WTC11 (cell line): ENCODE measurements at regions of chr12 and their contacts with region 1.

Region 1: GRCh38 chr12:124512667-124513296 is 54.6 kb downstream of the NCOR2 start:
- DNase-seq: peak; percentile 84
- ATAC-seq: peak; percentile 75
- H3K4me3 Mint-ChIP-seq: 0 out of 2 replicates have a peak overlapping the region, but pooled peaks have one; percentile 14
- H3K27ac Mint-ChIP-seq: peak overlapping the region; percentile 98
- H3K4me1 Mint-ChIP-seq: peaks cover 62% of the 10 kb centered on the region
- H3K27me3 Mint-ChIP-seq: no peaks in the 10 kb centered on the region
- CTCF ChIP-seq: no peak

Region 2: GRCh38 chr12:124498275-124499189 is 14.2 kb before region 1 on chr12:
- CTCF ChIA-PET with region 1: interaction called, 12 read pairs
- POLR2A ChIA-PET with region 1: interaction called, 5 read pairs
- DNase-seq: no peak
- ATAC-seq: no peak
- H3K4me3 Mint-ChIP-seq: no peak overlapping the region
- H3K27ac Mint-ChIP-seq: peak overlapping the region; percentile 76
- H3K4me1 Mint-ChIP-seq: peaks cover 61% of the 10 kb centered on the region
- H3K27me3 Mint-ChIP-seq: no peaks in the 10 kb centered on the region
- CTCF ChIP-seq: no peak

Region 3: GRCh38 chr12:124530637-124531263 is 18.0 kb after region 1 on chr12:
- CTCF ChIA-PET with region 1: no interaction called
- POLR2A ChIA-PET with region 1: no interaction called
- DNase-seq: no peak
- ATAC-seq: no peak
- H3K4me3 Mint-ChIP-seq: no peak overlapping the region
- H3K27ac Mint-ChIP-seq: no peak overlapping the region
- H3K4me1 Mint-ChIP-seq: peaks cover 45% of the 10 kb centered on the region
- H3K27me3 Mint-ChIP-seq: no peaks in the 10 kb centered on the region
- CTCF ChIP-seq: no peak